H1 (cell line): ENCODE measurements at regions of chr19 and their contacts with region 1.

Region 1: DNA sequence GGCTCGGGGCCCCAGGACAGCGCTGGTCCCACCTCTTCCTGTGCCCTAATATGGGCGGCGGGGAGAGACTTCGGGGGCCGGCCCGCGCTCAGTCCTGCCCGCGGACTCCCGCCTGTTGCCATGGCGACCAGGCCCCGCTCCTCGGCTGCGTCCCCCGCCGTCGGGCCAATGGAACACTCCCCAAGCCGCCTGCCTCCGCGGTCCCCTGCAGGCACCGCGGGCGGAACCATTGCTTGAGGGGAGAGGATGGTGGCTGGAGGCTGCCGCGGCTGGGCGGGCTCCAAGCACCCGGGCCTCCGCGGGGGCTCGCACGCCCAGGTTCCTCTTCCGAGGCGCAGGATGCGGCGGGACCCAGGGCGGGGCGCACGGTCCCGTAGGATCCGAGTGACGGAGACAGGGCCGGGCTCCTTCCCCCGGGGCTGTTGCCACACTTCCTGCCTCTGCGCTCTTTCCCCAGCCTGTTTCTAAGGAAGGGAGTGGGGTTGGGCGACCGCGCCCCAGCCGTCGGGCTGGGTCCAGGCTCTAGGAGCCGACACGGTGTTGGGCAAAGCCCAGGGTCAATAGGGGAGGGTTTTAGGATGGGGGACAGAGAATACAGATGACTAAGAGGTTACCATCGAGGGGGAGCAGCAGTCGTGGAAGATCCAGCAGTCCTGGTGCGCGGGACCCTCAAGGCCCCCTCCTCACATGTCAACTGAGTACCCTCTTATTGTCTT is 1.2 kb upstream of the JUNB start:
- DNase-seq: peak; percentile 87 to 97
- H3K4me3 ChIP-seq: peak overlapping the region; percentile 36 to 71 (median 52)
- H3K27ac ChIP-seq: no peak overlapping the region; the same call in 1 of the 2 replicates
- H3K4me1 ChIP-seq: peaks cover 7 to 32% (median 22%) of the 10 kb centered on the region in 4 experiments
- H3K27me3 ChIP-seq: peaks cover 0 to 18% (median 13%) of the 10 kb centered on the region in 4 experiments; a peak in 5 of 7 replicates
- CTCF ChIP-seq: no peak
- EP300 ChIP-seq: peak in 1 of 2 experiments; percentile 100; a peak in 2 of 3 replicates
- POLR2A ChIP-seq: no peak
- RAD21 ChIP-seq: no peak

Region 2: DNA sequence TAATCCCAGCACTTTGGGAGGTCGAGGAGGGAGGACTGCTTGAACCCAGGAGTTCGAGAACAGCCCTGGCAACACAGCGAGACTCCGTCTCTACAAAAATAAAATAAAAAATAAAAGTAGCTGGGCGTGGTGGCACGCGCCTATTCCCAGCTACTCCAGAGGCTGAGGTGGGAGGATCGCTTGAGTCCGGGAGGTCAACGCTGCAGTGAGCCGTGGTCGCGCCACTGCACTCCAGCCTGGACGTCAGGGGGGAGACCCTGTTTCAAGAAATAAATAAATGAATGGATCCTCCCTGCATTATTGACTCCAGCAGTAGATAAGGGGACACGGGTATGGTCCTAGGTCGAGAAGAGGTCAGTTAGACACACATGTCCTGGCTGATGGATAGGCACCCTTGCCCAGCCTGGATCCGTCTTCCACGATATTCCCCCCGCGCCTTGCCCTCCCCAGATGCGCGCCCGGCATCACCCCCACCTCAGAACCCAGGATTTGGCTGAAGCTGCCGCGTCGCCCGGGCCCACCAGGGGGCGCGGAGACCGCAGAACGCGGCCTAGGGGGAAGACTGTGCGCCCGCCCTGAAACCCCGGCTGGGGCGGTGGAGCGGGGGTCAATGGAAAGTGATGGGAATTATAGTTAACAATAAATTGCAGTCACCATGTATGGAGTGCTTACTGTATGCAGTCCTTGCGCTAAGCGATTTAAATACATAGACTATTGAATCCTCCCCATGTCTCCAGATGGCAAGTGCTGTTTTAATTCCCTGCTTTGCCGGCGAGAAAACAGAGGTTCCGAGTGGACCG is 12.6 kb before region 1 on chr19:
- CTCF ChIA-PET with region 1: interaction called, 277 read pairs
- POLR2A ChIA-PET with region 1: interaction called, 317 read pairs
- DNase-seq: peak in 1 of 2 experiments; percentile 95
- H3K4me3 ChIP-seq: peak overlapping the region; percentile 40 to 69 (median 62)
- H3K27ac ChIP-seq: no peak overlapping the region
- H3K4me1 ChIP-seq: peaks cover 0 to 22% (median 17%) of the 10 kb centered on the region in 4 experiments; a peak in 6 of 7 replicates
- H3K27me3 ChIP-seq: no peaks in the 10 kb centered on the region
- CTCF ChIP-seq: peak; percentile 81 to 92 (median 81)
- EP300 ChIP-seq: peak in 1 of 2 experiments; percentile 41; a peak in 1 of 3 replicates
- POLR2A ChIP-seq: no peak
- RAD21 ChIP-seq: peak; percentile 74 to 84

Region 3: DNA sequence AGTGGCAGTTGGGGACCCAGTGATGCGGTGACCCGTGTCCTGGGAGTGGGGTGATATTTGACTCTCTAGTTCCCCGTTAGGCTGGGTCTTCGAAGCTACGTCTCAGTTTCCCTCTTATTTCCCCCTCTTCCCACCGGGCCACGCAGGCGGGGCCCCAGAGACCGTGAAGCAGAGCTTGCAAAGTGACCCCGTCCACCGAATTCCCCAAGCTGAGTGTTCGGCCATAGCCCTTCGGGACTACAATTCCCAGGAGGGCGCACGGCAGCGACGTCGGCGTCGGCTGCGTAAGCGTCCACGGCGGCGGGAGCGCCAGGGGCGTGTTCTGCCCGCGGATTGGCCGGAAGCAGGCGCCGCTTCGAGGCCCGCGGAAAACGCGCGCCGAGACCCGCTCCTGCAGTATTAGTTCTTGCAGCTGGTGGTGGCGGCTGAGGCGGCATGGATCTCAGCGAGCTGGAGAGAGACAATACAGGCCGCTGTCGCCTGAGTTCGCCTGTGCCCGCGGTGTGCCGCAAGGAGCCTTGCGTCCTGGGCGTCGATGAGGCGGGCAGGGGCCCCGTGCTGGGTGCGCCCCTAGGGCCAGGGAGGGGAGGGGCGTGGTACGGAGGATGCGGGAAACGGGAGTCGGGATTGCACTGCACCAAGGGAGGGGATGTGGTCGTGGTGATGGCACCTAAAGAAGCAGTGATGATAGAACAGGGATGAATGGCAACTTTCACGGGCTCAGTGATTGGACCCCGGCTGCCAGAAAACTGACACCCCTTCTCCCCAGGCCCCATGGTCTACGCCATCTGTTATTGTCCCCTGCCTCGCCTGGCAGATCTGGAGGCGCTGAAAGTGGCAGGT is 16.4 kb after region 1 on chr19 and contains the start of gene RNASEH2A:
- CTCF ChIA-PET with region 1: interaction called, 9 read pairs
- POLR2A ChIA-PET with region 1: interaction called, 26 read pairs
- DNase-seq: peak in 1 of 2 experiments; percentile 91
- H3K4me3 ChIP-seq: peak within 1 kb of the TSS; percentile 78 to 87 (median 80)
- H3K27ac ChIP-seq: peak within 1 kb of the TSS; percentile 33; the same call in 1 of the 2 replicates
- H3K4me1 ChIP-seq: peaks cover 0 to 14% (median 9%) of the 10 kb centered on the region in 4 experiments; a peak in 6 of 7 replicates
- H3K27me3 ChIP-seq: peaks cover 0 to 4% (median under 1%) of the 10 kb centered on the region in 4 experiments; a peak in 2 of 7 replicates
- CTCF ChIP-seq: no peak
- EP300 ChIP-seq: no peak
- POLR2A ChIP-seq: peak in 1 of 2 experiments; percentile 83; a peak in 1 of 3 replicates
- RAD21 ChIP-seq: no peak
- total RNA-seq, gene RNASEH2A: 67.5 and 67.9 TPM in 2 replicates

Region 4: GRCh38 chr19:12825254-12826131 is 35.4 kb after region 1 on chr19:
- CTCF ChIA-PET with region 1: interaction called, 6 read pairs
- POLR2A ChIA-PET with region 1: interaction called, 14 read pairs
- DNase-seq: peak in 1 of 2 experiments; percentile 98
- H3K4me3 ChIP-seq: peak overlapping the region; percentile 42 to 64 (median 55)
- H3K27ac ChIP-seq: peak overlapping the region; percentile 26; the same call in 1 of the 2 replicates
- H3K4me1 ChIP-seq: peaks cover 0 to 8% (median 4%) of the 10 kb centered on the region in 4 experiments; a peak in 4 of 7 replicates
- H3K27me3 ChIP-seq: no peaks in the 10 kb centered on the region
- CTCF ChIP-seq: peak; percentile 76 to 81 (median 77)
- EP300 ChIP-seq: no peak
- POLR2A ChIP-seq: peak in 1 of 2 experiments; percentile 65; a peak in 1 of 3 replicates
- RAD21 ChIP-seq: peak; percentile 25 to 46; a peak in 2 of 4 replicates

Region 5: GRCh38 chr19:12933287-12934072 is 143.4 kb after region 1 on chr19 and contains the start of gene FARSA:
- CTCF ChIA-PET with region 1: no interaction called
- POLR2A ChIA-PET with region 1: no interaction called
- DNase-seq: peak; percentile 65 to 88
- H3K4me3 ChIP-seq: peak within 1 kb of the TSS; percentile 80 to 100 (median 97)
- H3K27ac ChIP-seq: peak within 1 kb of the TSS; percentile 51
- H3K4me1 ChIP-seq: peaks cover 0 to 14% (median 11%) of the 10 kb centered on the region in 4 experiments; a peak in 5 of 7 replicates
- H3K27me3 ChIP-seq: no peaks in the 10 kb centered on the region
- CTCF ChIP-seq: no peak
- EP300 ChIP-seq: no peak
- POLR2A ChIP-seq: peak in 1 of 2 experiments; percentile 82; a peak in 2 of 3 replicates
- RAD21 ChIP-seq: no peak; a peak in 1 of 4 replicates
- total RNA-seq, gene FARSA: 103 and 108 TPM in 2 replicates